Heart left ventricle (tissue), 16 donors: ENCODE measurements at regions of chr2 and their contacts with region 1.

Region 1: GRCh38 chr2:187138265-187138664 is 289.3 kb upstream of the ZSWIM2 start:
- DNase-seq: peak in 4 of 5 donors; percentile 31 to 39 (median 35)
- ATAC-seq: peak in 3 of 4 donors; percentile 47 to 60 (median 55)
- H3K4me3 ChIP-seq: no peak overlapping the region
- H3K27ac ChIP-seq: peak overlapping the region in 1 of 12 donors; percentile 27
- H3K4me1 ChIP-seq: peaks cover 0 to 14% (median 0%) of the 10 kb centered on the region in 12 donors
- H3K27me3 ChIP-seq: no peaks in the 10 kb centered on the region
- CTCF ChIP-seq: peak in 11 of 12 donors; percentile 13 to 63 (median 48)
- POLR2A ChIP-seq: no peak

Region 2: GRCh38 chr2:186862869-186863709 is 275.2 kb before region 1 on chr2:
- intact Hi-C with region 1: loop called in 3 of 10 experiments (anchors 10 kb)
- DNase-seq: no peak
- ATAC-seq: peak in 2 of 4 donors; percentile 59 to 63
- H3K4me3 ChIP-seq: no peak overlapping the region
- H3K27ac ChIP-seq: no peak overlapping the region
- H3K4me1 ChIP-seq: peaks cover 0 to 7% (median 0%) of the 10 kb centered on the region in 12 donors
- H3K27me3 ChIP-seq: no peaks in the 10 kb centered on the region
- CTCF ChIP-seq: peak; percentile 58 to 86 (median 70)
- POLR2A ChIP-seq: no peak

Region 3: DNA sequence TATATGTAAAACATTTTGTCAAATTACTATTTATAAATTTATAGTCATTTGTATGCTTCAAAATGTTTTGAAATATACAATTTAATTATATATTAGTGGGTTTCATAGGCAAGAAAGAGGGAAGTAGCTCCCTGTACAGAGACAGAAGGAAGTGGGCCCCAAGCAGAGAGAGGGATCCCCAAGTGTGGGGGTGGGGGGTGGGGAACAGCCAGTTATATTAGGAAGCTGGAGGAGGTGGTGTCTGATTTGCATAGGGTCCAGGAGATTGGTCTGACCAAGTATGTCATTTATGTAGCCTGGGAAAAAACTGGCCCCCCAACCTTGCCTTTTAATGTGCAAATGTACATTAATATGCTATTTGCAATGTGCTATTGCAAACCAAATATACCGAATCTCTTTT is 212.8 kb before region 1 on chr2:
- intact Hi-C with region 1: no loop called
- DNase-seq: no peak
- ATAC-seq: no peak
- H3K4me3 ChIP-seq: no peak overlapping the region
- H3K27ac ChIP-seq: no peak overlapping the region
- H3K4me1 ChIP-seq: no peaks in the 10 kb centered on the region
- H3K27me3 ChIP-seq: no peaks in the 10 kb centered on the region
- CTCF ChIP-seq: no peak
- POLR2A ChIP-seq: no peak